ENCODE measurements at regions of chr7 and their contacts with region 1.

Region 1: GRCh38 chr7:74365322-74366022 is 76.3 kb downstream of the CLIP2 start:
- DNase-seq: peak; percentile 84
- H3K4me3 ChIP-seq: no peak overlapping the region
- H3K27ac ChIP-seq: peak overlapping the region; percentile 52
- H3K4me1 ChIP-seq: no peaks in the 10 kb centered on the region
- H3K27me3 ChIP-seq: no peaks in the 10 kb centered on the region
- CTCF ChIP-seq: no peak

Region 2: GRCh38 chr7:74289659-74290514 is 75.6 kb before region 1 on chr7:
- intact Hi-C with region 1: loop called (anchors 10 kb)
- DNase-seq: peak; percentile 73
- H3K4me3 ChIP-seq: peak overlapping the region; percentile 84
- H3K27ac ChIP-seq: peak overlapping the region; percentile 87
- H3K4me1 ChIP-seq: peaks cover 23% of the 10 kb centered on the region
- H3K27me3 ChIP-seq: no peaks in the 10 kb centered on the region
- CTCF ChIP-seq: no peak

Region 3: GRCh38 chr7:74569501-74570075 is 204.1 kb after region 1 on chr7:
- intact Hi-C with region 1: no loop called
- DNase-seq: no peak
- H3K4me3 ChIP-seq: no peak overlapping the region
- H3K27ac ChIP-seq: no peak overlapping the region
- H3K4me1 ChIP-seq: no peaks in the 10 kb centered on the region
- H3K27me3 ChIP-seq: no peaks in the 10 kb centered on the region
- CTCF ChIP-seq: no peak

Region 4: DNA sequence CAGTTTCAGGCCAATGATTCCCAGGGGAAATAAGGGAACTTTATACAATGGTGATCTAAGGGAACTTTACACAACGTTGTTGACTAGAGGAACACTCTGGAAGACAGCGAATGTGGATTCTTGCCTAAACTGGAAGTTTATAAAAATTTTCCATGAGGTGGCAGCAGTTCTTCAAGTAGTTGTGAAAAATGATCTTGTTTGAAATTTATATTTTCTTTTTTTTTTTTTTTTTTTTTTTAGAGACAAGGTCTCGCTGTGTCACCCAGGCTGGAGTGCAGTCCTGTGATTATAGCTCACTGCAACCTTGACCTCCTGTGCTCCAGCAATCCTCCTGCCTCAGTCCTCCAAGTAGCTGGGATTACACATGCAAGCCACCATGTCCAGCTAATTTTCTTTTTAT is 260.0 kb after region 1 on chr7:
- intact Hi-C with region 1: no loop called
- DNase-seq: no peak
- H3K4me3 ChIP-seq: no peak overlapping the region
- H3K27ac ChIP-seq: no peak overlapping the region
- H3K4me1 ChIP-seq: no peaks in the 10 kb centered on the region
- H3K27me3 ChIP-seq: no peaks in the 10 kb centered on the region
- CTCF ChIP-seq: no peak